Dendritic cell treated with granulocyte-macrophage colony-stimulating factor and Interleukin-4, amounts not matched to agents 40 ng/mL and 50 ng/mL, for 4 days (primary cell): ENCODE measurements at regions of chr6 and their contacts with region 1.

Region 1: DNA sequence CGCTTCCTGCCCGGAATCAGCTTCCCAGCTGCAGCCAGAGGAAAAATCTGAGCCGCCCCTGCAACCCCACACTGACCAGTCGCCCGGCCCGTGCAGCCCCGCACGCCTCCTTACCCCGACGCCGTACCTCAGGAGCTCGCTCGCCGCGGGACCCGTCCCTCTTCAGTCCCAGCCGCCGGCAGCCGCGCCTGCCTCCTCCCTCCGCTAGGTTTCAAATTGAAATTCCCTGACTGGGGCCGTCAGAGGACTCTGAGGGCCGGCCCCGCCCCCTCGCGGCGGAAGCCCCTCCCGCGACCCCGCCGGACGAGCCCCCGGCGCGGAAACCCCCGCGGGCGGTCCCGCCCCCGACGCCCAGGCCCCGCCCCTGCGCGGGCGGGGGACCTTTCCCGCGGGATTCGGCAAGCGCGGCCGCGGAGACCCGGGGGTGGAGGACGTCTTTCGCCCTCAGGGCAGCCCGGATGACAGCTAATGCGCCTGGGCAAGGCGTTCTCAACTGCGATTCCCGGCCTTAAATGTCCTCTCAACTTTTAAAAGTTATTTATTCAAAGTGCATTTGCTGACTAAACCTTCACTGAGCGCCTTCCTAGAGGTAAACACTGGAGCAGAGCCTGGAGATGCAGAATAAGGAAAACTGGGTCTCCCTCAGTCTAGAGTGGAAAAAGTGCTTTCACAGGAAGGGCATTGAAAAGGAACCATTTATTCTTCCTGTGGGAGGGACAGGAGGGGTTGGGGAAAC is at the start of gene EPB41L2:
- H3K4me3 Mint-ChIP-seq: peak within 1 kb of the TSS; percentile 89
- H3K27ac Mint-ChIP-seq: peak within 1 kb of the TSS; percentile 69
- H3K4me1 Mint-ChIP-seq: peaks cover 30% of the 10 kb centered on the region
- H3K27me3 Mint-ChIP-seq: peaks cover 25% of the 10 kb centered on the region

Region 2: GRCh38 chr6:131116749-131117360 is 53.7 kb after region 1 on chr6:
- intact Hi-C with region 1: loop called (anchors 1 kb)
- H3K4me3 Mint-ChIP-seq: no peak overlapping the region
- H3K27ac Mint-ChIP-seq: no peak overlapping the region
- H3K4me1 Mint-ChIP-seq: peaks cover 12% of the 10 kb centered on the region
- H3K27me3 Mint-ChIP-seq: no peaks in the 10 kb centered on the region

Region 3: DNA sequence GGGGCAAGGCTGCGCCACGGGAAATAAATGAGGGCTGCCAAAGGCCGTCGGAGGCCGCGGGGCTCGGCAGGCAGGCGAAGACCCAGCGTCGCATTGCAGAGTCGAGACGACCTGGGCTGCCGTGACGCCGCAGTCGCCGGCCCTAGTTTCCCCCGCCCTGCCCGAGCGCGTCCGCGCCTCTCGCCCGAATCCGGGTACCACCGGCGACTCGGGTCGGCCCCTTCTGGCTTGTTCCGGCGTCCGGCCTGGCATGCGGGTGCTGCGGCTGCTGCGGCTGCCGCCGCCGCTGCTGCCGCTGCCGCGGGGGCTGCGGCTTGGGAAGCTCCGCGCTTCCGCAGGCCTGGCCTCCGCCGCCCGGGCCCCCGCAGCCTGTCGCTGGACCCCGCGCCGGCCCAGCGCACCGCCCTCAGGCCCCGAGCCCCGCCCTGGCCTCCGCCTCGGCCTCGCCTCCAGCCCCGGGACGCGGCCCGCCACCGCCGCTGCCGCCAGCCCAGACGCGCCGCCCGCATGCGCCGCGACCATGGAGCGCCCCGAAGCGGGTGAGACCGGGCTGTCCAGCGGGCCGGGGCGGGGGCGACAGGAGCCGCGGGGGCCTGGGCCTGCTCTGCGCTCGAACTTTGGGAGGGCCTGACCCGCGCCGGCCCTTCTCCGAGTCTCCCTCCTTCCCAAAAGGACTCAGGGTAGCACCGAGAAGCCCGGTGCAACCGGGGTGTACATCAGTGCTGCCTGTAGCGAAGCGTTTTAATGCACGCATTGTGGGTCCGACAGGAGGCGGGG is 72.2 kb after region 1 on chr6 and contains the start of gene AKAP7:
- intact Hi-C with region 1: loop called (anchors 1 kb)
- H3K4me3 Mint-ChIP-seq: peak within 1 kb of the TSS; percentile 78
- H3K27ac Mint-ChIP-seq: peak within 1 kb of the TSS; percentile 83
- H3K4me1 Mint-ChIP-seq: peaks cover 16% of the 10 kb centered on the region
- H3K27me3 Mint-ChIP-seq: no peaks in the 10 kb centered on the region